ENCODE measurements at regions of chr2 and their contacts with region 1.

Region 1: DNA sequence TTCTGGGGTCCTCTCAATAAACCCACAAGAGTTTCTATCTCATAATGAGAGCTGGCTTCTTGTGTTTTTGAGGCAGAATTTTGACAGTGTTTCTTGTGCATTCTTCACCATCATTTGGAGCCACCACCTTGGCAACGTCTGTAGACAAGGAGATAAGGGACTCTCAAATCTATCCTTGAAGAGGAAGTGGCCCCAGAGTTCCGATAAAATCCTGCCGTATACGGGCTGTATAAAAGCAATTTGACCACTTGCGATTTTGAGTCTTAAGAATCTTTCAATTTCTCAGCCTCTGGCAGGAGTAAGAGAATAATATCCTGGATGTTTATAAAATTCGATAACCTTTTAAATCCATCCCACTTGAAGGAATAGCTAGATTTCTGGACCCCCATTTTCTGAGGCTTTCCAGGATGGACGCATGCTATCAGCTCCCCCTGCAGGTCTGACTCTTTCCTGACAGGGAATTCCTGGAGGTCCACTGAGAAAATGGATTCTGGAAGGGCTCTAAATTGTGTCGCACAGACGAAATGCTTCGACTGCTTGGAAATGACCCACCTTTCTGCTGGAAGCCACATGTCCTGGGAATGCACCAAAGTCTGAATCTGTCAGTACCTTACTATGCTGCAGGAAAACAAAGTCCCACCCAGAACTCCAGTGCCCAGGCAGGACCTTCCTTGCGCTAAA is 54.1 kb downstream of the E2F6 start:
- DNase-seq: peak; percentile 43
- H3K27ac ChIP-seq: no peak overlapping the region
- CTCF ChIP-seq: peak; percentile 76

Region 2: GRCh38 chr2:11234309-11234708 is 177.6 kb before region 1 on chr2:
- CTCF ChIA-PET with region 1: interaction called, 14 read pairs
- POLR2A ChIA-PET with region 1: no interaction called
- DNase-seq: peak; percentile 20
- H3K27ac ChIP-seq: no peak overlapping the region
- CTCF ChIP-seq: peak; percentile 63

Region 3: DNA sequence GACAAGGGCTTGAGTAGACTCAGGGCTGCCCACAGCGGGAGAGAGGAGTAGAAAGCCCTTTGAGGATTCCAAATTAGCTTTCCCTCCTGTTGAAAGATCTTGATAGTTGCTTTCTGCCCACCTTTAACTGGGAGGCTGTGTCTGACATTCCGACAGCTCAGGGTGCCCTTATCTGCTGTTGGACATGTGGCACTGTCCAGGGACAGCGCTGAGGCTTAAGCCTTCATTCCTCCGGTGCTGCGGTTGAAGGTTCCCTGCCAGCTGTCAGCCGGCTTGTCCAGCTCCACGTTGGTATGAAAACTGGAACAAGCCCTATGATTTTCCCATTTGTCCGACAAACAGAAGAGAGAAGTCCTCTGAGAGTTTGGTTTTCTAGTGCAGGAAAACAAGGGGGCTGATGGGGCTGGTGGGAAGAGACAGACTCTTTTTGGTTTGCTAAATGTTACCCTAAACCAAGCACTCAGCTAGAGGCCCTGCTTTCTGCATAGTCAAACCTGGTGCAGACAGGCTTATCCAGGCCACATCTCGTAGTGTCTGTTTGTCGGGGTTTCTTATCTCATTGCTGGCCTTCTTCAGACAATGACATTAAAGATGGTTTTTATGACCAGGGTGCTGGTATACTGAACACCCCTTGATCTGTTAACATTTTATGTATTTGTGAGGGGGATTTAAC is 146.4 kb after region 1 on chr2:
- CTCF ChIA-PET with region 1: no interaction called
- POLR2A ChIA-PET with region 1: no interaction called
- DNase-seq: no peak
- H3K27ac ChIP-seq: no peak overlapping the region
- CTCF ChIP-seq: no peak

Measured in RWPE1 (cell line).